ENCODE measurements at regions of chr6 and their contacts with region 1.

Region 1: GRCh38 chr6:32868257-32868788 is 14.3 kb downstream of the PSMB9 start:
- DNase-seq: peak; percentile 58
- H3K4me3 ChIP-seq: no peak overlapping the region; a peak in 1 of 4 replicates
- H3K27ac ChIP-seq: no peak overlapping the region
- H3K4me1 ChIP-seq: no peaks in the 10 kb centered on the region
- H3K27me3 ChIP-seq: peaks cover 33% of the 10 kb centered on the region
- CTCF ChIP-seq: peak; percentile 97
- EP300 ChIP-seq: no peak
- RAD21 ChIP-seq: peak; percentile 88

Region 2: DNA sequence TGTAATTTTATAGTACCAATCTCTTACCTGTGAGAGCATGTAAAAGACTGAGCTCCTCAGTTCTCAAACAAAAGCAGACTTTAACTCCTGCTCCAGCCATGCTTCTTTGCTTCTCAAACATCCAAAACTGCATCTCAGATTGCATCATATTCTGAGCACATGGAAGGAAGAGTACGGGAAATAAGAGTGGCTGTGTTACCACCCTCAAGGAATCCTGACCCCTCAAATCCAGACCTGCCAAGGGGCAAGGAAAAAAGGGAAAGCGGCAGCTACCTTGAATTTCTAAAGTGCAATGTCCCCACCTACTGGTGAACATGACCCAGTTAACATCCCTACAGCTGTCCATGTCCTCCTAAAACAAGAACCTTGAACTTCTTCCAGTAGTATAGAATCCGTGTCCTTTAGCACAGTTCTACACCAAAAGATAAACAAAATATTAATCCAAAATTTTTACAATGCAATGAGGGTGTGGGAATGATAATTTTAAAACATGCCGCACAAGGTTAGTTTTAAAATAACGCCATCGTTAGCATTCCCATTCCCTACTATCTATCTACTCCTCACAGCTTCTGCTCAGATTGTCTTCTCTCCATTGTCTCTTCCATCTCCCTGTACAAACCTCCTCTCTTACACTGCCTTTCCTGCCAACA is 167.8 kb before region 1 on chr6:
- CTCF ChIA-PET with region 1: interaction called, 11 read pairs
- POLR2A ChIA-PET with region 1: no interaction called
- DNase-seq: peak; percentile 52
- H3K4me3 ChIP-seq: no peak overlapping the region
- H3K27ac ChIP-seq: no peak overlapping the region
- H3K4me1 ChIP-seq: no peaks in the 10 kb centered on the region
- H3K27me3 ChIP-seq: no peaks in the 10 kb centered on the region; the same call in none of the 2 replicates
- CTCF ChIP-seq: peak; percentile 73
- EP300 ChIP-seq: no peak
- RAD21 ChIP-seq: peak; percentile 78

Region 3: DNA sequence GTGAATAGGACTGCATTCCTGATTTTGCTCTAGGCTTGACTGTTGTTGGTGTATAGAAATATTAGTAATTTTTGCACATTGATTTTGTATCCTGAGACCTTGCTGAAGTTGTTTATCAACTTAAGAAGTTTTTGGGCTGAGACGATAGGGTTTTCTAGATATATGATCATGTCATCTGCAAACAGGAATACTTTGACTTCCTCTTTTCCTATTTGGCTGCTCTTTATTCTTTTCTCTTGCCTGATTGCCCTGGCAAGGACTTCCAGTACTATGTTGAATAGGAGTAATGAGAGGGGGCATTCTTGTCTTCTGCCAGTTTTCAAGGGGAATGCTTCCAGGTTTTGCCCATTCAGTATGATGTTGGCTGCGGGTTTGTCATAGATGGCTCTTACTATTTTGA is 64.9 kb before region 1 on chr6:
- CTCF ChIA-PET with region 1: interaction called, 21 read pairs
- POLR2A ChIA-PET with region 1: no interaction called
- DNase-seq: no peak
- H3K4me3 ChIP-seq: no peak overlapping the region
- H3K27ac ChIP-seq: no peak overlapping the region
- H3K4me1 ChIP-seq: no peaks in the 10 kb centered on the region
- H3K27me3 ChIP-seq: peaks cover 15% of the 10 kb centered on the region; the same call in 1 of the 2 replicates
- CTCF ChIP-seq: no peak
- EP300 ChIP-seq: no peak
- RAD21 ChIP-seq: no peak

Region 4: GRCh38 chr6:32843979-32844838 is 24.1 kb before region 1 on chr6 and contains the start of gene PSMB8:
- CTCF ChIA-PET with region 1: interaction called, 223 read pairs
- POLR2A ChIA-PET with region 1: no interaction called
- DNase-seq: peak; percentile 94
- H3K4me3 ChIP-seq: peak within 1 kb of the TSS; percentile 71 to 72
- H3K27ac ChIP-seq: peak within 1 kb of the TSS; percentile 53 to 57
- H3K4me1 ChIP-seq: peaks cover 0 to 13% of the 10 kb centered on the region in 2 experiments; a peak in 1 of 4 replicates
- H3K27me3 ChIP-seq: no peaks in the 10 kb centered on the region
- CTCF ChIP-seq: peak; percentile 28; the same call in 1 of the 2 replicates
- EP300 ChIP-seq: no peak
- RAD21 ChIP-seq: no peak
- polyA plus RNA-seq, gene PSMB8: 52.8 and 55.7 TPM in 2 replicates

Region 5: DNA sequence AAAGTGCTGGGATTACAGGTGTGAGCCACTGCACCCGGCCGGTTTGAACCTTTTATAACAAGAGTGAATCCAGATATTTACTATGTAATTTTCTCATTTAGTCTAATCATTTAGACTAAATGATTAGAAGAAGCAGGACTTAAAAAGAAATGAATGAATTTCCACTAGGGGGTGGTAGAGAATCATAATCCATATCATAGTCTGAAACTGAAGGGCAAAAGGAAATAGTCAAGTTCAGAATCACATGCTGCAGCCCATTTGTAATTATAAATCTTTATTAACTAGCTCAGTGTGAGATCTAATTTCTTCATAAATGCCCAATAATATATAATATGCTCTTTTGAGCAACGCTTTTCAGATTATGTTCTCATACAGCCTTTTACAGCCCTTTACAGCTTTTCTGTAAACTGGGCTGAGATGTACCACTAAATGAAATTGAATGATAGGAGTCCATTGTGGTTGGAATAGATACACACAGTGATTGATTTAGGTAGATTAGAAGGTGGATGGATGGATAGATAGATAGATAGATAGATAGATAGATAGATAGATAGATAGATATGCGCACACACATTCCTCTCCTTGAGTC is 17.5 kb after region 1 on chr6:
- CTCF ChIA-PET with region 1: interaction called, 32 read pairs
- POLR2A ChIA-PET with region 1: no interaction called
- DNase-seq: peak; percentile 50
- H3K4me3 ChIP-seq: no peak overlapping the region; a peak in 1 of 4 replicates
- H3K27ac ChIP-seq: no peak overlapping the region
- H3K4me1 ChIP-seq: peaks cover 0 to 8% of the 10 kb centered on the region in 2 experiments; a peak in 1 of 4 replicates
- H3K27me3 ChIP-seq: peaks cover 14% of the 10 kb centered on the region; the same call in 1 of the 2 replicates
- CTCF ChIP-seq: peak; percentile 78
- EP300 ChIP-seq: no peak
- RAD21 ChIP-seq: peak; percentile 85

Region 6: GRCh38 chr6:32971581-32972352 is 103.4 kb after region 1 on chr6:
- CTCF ChIA-PET with region 1: interaction called, 21 read pairs
- POLR2A ChIA-PET with region 1: no interaction called
- DNase-seq: peak; percentile 92
- H3K4me3 ChIP-seq: peak overlapping the region; percentile 83 to 88
- H3K27ac ChIP-seq: peak overlapping the region; percentile 97 to 99
- H3K4me1 ChIP-seq: peaks cover 21 to 28% of the 10 kb centered on the region in 2 experiments; a peak in 3 of 4 replicates
- H3K27me3 ChIP-seq: no peaks in the 10 kb centered on the region
- CTCF ChIP-seq: no peak
- EP300 ChIP-seq: peak; percentile 7 to 55; a peak in 2 of 4 replicates
- RAD21 ChIP-seq: no peak